RWPE1 (cell line): ENCODE measurements at regions of chr11 and their contacts with region 1.

Region 1: DNA sequence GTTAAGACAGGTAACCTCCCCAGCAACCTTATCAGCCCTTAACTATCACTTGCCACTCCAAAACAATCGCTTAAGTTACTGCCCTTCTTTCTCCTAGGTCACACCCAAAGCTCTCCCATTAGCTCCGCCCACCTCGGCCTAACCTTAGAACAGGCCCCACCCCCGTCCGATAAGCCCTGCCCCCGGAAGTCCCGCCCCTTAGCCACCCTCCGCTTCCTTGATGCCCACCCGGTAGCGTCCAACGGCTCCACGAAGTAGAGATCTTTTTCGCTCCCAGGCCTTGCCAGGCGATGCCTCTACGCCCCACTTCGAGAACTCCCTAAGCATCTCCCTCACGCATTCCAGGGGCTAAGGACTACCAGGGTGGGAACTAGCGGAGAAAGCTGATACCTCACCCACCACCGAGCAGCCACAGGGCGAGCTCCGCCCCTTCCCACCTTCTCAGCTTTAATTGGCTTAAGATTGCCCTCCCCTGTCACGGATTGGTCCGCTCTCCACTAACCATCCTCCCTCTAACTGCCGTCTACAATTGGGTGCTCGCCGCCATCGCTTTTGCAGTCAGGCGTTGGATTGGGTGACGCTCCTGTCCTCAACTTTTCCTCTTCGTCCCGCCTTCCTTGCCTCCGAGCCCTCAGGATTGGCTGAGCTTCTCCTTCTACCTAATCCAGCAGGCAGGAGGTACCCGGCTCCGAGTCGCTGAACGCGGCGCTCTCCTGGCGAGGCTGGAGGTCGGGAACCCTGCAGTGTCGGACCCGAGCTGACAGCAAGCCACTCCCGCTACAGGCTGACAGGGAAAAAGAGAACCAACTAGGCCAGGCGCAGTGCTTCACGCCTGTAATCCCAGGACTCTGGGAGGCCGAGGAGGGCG is at the start of gene ZBTB3:
- DNase-seq: peak; percentile 98
- H3K27ac ChIP-seq: peak within 1 kb of the TSS; percentile 86
- CTCF ChIP-seq: no peak

Region 2: DNA sequence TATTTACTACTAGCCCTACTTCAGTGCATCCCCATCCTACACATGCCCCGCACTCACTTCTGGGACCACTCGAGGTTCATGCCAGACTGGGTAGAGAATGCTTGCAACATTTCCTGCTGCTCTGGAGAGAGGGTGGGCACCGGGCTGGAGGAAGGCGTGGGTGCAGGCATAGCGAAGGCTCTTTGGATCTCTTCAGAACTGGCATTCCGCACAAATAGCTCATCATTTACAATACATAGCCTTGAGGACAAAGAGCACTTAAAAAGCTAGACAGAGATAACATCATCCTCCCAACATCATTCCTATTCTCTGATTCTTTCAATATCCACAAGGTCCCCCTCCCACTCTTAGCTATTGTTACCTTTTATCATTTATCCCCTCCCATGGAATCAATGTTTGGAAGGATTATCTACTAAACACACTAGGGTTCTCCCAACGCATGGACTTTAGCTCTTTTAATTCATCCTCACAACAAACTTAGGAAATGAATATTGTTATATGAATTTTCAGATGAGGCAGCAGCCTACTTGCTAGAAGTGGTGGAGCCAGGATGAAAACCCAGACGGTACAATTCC is 40.3 kb after region 1 on chr11:
- CTCF ChIA-PET with region 1: no interaction called
- POLR2A ChIA-PET with region 1: interaction called, 11 read pairs
- DNase-seq: no peak
- H3K27ac ChIP-seq: peak overlapping the region; percentile 28; the same call in 1 of the 2 replicates
- CTCF ChIP-seq: no peak